Endothelial cell of umbilical vein (primary cell): ENCODE measurements at regions of chr3 and their contacts with region 1.

Region 1: DNA sequence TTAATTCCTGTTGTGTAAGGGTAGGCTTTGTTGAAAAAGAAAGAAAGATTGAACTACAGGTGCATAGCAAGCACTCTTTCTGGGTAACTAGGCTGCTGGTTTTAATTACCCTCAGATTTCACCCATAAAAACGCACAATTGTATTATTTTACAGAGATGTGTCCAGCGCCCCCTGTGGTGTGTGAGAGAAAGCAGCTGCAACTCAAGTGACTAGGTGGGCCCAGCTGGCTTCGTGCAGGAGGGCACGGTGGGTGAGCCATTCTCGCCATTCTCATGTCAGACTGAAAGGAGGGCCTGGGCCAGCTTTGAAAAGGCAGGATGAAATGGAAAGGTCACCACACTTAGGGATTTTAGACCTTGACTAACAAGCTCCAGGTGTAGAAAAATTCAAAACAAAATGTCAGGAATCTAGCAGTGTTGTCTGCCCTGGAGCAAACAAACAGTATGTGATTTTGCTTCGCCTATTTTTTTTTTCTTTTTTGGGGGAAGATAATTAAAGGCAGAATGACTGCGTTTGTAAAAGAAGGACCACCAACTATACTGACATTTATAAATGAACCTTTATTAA is 122.5 kb downstream of the LRIG1 start:
- DNase-seq: peak; percentile 49
- H3K4me3 ChIP-seq: no peak overlapping the region
- H3K27ac ChIP-seq: no peak overlapping the region
- H3K4me1 ChIP-seq: peaks cover 10% of the 10 kb centered on the region
- H3K27me3 ChIP-seq: no peaks in the 10 kb centered on the region
- CTCF ChIP-seq: peak; percentile 55 to 62
- POLR2A ChIP-seq: no peak

Region 2: GRCh38 chr3:66115858-66116654 is 262.3 kb before region 1 on chr3:
- CTCF ChIA-PET with region 1: no interaction called
- POLR2A ChIA-PET with region 1: no interaction called
- dilution Hi-C with region 1: no loop called
- intact Hi-C with region 1: no loop called
- DNase-seq: peak; percentile 94
- H3K4me3 ChIP-seq: no peak overlapping the region
- H3K27ac ChIP-seq: peak overlapping the region; percentile 97
- H3K4me1 ChIP-seq: peaks cover 20% of the 10 kb centered on the region
- H3K27me3 ChIP-seq: no peaks in the 10 kb centered on the region
- CTCF ChIP-seq: no peak
- POLR2A ChIP-seq: no peak

Region 3: DNA sequence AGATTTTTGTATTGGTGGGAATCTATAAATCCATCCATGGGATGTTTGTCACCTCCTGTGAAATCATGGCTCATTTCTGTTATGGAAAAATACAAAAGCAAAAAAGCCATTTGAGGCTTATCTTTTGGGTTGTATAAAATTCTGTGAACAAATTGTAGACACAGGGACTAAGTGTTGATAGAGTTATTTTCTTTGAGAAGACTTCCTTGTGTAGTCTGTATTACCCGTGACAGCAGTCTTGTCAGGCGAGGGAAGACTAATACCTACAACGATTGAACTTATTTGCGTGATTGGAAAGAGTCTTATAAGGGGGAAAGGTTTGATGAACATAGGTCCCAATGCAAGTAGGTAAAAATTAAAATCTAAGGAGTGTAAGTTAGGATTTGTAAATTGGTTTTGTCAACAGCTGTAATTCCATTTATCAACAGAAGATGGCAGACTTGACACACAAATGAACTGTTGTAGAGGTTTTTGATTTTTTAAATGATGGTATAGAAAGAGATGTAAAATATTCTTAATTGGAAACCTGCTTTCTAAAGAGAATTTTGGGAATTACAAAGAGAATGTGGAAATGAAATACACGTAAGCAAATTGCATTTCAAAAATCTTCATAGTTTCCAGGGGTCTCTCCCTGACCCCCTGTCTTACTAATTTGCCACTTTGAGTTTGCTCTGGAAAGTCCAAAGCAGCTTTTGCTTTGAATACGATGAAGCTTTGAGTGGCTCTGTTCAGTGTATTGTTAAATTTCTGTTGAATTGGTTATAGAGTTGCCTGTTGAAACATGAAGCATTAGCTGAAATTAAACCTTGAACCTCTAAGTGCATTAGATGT is 124.3 kb before region 1 on chr3:
- CTCF ChIA-PET with region 1: interaction called, 18 read pairs
- POLR2A ChIA-PET with region 1: no interaction called
- dilution Hi-C with region 1: no loop called
- intact Hi-C with region 1: no loop called
- DNase-seq: peak; percentile 65
- H3K4me3 ChIP-seq: no peak overlapping the region
- H3K27ac ChIP-seq: no peak overlapping the region
- H3K4me1 ChIP-seq: peaks cover 6% of the 10 kb centered on the region
- H3K27me3 ChIP-seq: no peaks in the 10 kb centered on the region
- CTCF ChIP-seq: peak; percentile 28 to 41
- POLR2A ChIP-seq: no peak

Region 4: DNA sequence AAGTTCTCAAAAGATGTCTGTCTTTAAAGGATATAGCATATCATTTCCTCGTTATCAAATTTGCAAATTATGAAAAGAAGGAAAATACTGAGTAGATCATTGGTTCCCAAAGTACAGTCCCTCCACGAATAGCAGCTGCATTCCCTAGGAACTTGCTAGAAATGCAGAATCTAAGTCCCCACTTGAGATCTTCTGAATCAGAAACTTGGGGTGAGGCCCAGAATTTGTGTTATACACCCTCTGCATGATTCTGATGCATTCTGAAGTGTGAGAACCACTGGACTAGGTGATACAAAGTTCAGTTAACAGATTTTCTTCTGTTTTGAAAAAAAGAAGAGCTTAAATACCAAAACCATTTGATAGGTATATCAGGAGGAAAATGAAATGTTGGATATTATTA is 80.4 kb before region 1 on chr3:
- CTCF ChIA-PET with region 1: interaction called, 14 read pairs
- POLR2A ChIA-PET with region 1: interaction called, 6 read pairs
- dilution Hi-C with region 1: no loop called
- intact Hi-C with region 1: no loop called
- DNase-seq: no peak
- H3K4me3 ChIP-seq: no peak overlapping the region
- H3K27ac ChIP-seq: no peak overlapping the region
- H3K4me1 ChIP-seq: peaks cover 5% of the 10 kb centered on the region
- H3K27me3 ChIP-seq: no peaks in the 10 kb centered on the region
- CTCF ChIP-seq: no peak
- POLR2A ChIP-seq: no peak

Region 5: GRCh38 chr3:66353530-66353929 is 24.8 kb before region 1 on chr3:
- CTCF ChIA-PET with region 1: interaction called, 12 read pairs
- POLR2A ChIA-PET with region 1: no interaction called
- dilution Hi-C with region 1: no loop called
- intact Hi-C with region 1: no loop called
- DNase-seq: no peak
- H3K4me3 ChIP-seq: no peak overlapping the region
- H3K27ac ChIP-seq: peak overlapping the region; percentile 72
- H3K4me1 ChIP-seq: peaks cover 16% of the 10 kb centered on the region
- H3K27me3 ChIP-seq: no peaks in the 10 kb centered on the region
- CTCF ChIP-seq: no peak
- POLR2A ChIP-seq: no peak

Region 6: GRCh38 chr3:66394019-66394752 is 15.8 kb after region 1 on chr3:
- CTCF ChIA-PET with region 1: interaction called, 26 read pairs
- POLR2A ChIA-PET with region 1: no interaction called
- dilution Hi-C with region 1: no loop called
- intact Hi-C with region 1: no loop called
- DNase-seq: peak; percentile 37
- H3K4me3 ChIP-seq: no peak overlapping the region
- H3K27ac ChIP-seq: peak overlapping the region; percentile 50
- H3K4me1 ChIP-seq: peaks cover 28% of the 10 kb centered on the region
- H3K27me3 ChIP-seq: no peaks in the 10 kb centered on the region
- CTCF ChIP-seq: no peak
- POLR2A ChIP-seq: no peak

Region 7: DNA sequence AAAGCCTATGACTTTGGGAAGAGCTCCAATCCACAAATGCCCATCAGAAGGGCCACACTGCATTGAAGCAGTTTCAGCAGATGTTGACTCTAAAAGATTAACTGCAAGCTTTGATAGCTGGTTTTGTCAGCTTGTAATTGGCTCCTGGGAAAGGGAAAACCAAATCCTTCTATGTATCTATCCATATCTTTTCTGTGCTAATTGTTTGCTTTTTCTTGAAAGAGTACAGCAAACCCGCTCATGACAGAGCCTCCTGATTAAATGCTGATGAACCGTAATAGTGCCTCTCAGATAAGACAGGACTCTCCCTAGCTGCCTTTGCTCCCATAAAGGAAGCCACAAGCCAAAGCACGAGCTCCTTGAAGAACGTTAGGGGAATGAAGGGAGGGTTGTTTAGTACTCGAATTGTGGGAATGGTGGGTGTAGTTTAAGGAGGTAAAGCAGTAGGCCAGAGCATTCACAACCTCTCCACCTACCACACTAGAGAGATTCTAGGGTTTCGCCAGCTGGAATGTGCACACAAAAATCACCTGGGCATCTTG is 156.0 kb after region 1 on chr3:
- CTCF ChIA-PET with region 1: no interaction called
- POLR2A ChIA-PET with region 1: no interaction called
- dilution Hi-C with region 1: no loop called
- intact Hi-C with region 1: no loop called
- DNase-seq: no peak
- H3K4me3 ChIP-seq: no peak overlapping the region
- H3K27ac ChIP-seq: no peak overlapping the region
- H3K4me1 ChIP-seq: no peaks in the 10 kb centered on the region
- H3K27me3 ChIP-seq: no peaks in the 10 kb centered on the region
- CTCF ChIP-seq: no peak
- POLR2A ChIP-seq: no peak

Region 8: GRCh38 chr3:66609659-66610561 is 231.6 kb after region 1 on chr3:
- CTCF ChIA-PET with region 1: no interaction called
- POLR2A ChIA-PET with region 1: no interaction called
- dilution Hi-C with region 1: no loop called
- intact Hi-C with region 1: no loop called
- DNase-seq: no peak
- H3K4me3 ChIP-seq: no peak overlapping the region
- H3K27ac ChIP-seq: no peak overlapping the region
- H3K4me1 ChIP-seq: no peaks in the 10 kb centered on the region
- H3K27me3 ChIP-seq: peaks cover 2 to 5% of the 10 kb centered on the region in 2 experiments
- CTCF ChIP-seq: no peak
- POLR2A ChIP-seq: no peak

Region 9: DNA sequence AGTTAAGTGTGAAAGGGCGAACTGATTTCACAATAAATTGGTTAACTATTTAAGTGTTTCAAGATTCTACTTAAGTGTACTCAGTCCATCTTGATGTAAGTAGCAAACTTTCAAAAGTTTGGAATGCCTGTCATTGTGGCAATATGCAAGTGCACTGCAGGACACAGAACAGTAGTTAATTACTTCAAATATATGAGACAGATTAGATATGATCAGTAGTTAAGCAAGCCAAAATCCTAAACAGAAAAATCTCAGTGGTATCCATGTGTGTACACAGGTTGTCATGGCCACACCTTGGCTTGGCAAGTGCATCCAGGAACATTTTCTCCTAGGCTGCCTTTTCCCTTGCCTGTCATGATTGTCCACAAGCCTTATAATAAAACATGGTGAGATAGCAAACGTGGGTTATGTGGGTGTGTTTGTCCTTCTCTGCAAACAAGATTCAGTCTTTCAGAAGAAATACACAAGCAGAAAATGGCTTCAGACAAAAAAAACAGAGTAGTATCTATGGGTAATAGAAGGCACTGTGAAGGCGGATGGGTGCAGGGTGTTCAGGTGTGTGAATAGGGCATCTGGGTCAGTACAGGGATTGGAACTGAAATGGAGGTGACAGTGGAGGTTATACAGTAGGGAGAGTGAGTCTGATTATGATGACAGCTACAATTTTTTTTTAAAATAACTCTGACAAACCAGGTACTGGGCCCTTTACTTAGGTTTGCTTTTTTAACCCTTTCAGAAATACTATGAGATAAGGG is 351.5 kb after region 1 on chr3:
- CTCF ChIA-PET with region 1: no interaction called
- POLR2A ChIA-PET with region 1: no interaction called
- dilution Hi-C with region 1: no loop called
- intact Hi-C with region 1: no loop called
- DNase-seq: no peak
- H3K4me3 ChIP-seq: no peak overlapping the region
- H3K27ac ChIP-seq: no peak overlapping the region
- H3K4me1 ChIP-seq: no peaks in the 10 kb centered on the region
- H3K27me3 ChIP-seq: peaks cover 3 to 4% of the 10 kb centered on the region in 2 experiments
- CTCF ChIP-seq: no peak
- POLR2A ChIP-seq: no peak

Region 10: GRCh38 chr3:66822186-66823008 is 444.1 kb after region 1 on chr3:
- CTCF ChIA-PET with region 1: interaction called, 9 read pairs
- POLR2A ChIA-PET with region 1: no interaction called
- dilution Hi-C with region 1: loop called (anchors 25 kb)
- intact Hi-C with region 1: no loop called
- DNase-seq: peak; percentile 74
- H3K4me3 ChIP-seq: no peak overlapping the region
- H3K27ac ChIP-seq: no peak overlapping the region
- H3K4me1 ChIP-seq: no peaks in the 10 kb centered on the region
- H3K27me3 ChIP-seq: peaks cover 14 to 16% of the 10 kb centered on the region in 2 experiments
- CTCF ChIP-seq: peak; percentile 74 to 83
- POLR2A ChIP-seq: no peak